ENCODE measurements at regions of chr3 and their contacts with region 1.

Region 1: DNA sequence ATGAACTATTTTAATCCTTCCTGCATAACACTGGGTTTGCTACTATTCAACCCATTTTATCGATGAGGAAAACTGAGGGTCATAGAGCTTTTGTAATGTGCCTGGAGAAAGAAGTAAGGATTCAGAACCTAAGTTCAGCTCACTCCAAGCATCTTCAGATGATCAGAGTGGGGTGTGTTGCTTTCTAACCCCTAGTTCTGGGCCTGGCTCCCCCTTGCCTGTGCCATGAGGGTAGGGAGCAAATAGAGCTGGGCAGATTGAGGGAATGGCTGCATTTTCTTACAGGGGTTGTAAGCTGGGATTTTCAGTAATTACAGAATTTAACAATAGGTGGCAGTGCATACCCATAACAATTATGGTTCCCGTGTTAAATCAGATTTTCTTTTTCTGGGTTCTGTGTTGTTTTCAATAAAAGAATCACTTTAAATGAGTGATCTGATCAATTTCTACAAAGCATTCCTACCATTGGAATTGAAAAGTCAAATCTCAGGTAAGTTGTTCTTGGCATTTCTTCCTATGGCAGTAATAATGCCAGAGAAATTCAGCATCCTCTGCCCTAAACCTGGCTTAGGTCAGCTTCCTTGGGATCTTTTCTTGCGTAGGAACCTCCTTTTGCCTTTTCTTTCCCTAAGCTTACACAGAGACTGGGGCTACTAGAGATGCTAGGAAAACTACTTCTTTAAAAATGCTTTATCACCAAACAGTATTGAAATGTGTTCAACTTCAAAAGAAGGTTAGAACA is 103.8 kb upstream of the IL12A start:
- DNase-seq: no peak
- ATAC-seq: peak; percentile 48 to 57
- H3K4me3 ChIP-seq: no peak overlapping the region
- H3K27ac ChIP-seq: no peak overlapping the region
- H3K4me1 ChIP-seq: peaks cover 19% of the 10 kb centered on the region
- H3K27me3 ChIP-seq: no peaks in the 10 kb centered on the region
- CTCF ChIP-seq: peak; percentile 56

Region 2: DNA sequence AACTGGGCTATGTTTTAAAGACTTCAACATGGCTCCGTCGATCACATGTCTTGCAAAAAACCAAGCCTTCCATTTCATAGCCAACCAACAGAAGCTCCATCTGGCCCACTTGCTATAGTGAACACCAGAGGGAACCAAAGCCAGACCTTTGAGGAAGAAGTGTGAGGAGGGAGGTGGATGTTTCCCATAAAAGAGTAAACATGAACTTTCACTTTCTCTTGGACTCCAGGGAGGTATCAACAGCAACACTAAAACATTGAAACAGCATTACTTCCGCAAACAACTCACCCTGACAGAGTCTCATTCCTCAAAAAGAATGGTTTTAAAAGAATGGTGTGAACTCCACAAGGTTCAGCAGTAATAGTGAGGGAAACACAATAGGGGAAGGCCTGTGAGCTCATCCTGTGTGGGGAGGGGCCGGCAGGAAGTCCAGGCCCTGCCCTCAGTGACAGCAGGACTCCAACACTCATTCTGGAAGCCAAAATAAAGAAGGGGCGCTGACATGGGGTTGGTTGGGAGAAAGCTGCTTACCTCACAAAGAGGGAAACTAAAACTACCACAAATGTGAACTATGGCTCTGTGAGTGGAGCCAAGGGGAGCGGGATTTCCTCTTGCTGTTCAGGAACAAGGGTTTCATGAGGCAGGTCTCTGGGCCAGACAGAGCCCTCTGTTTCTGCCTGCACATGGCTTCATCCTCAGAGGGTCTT is 44.8 kb after region 1 on chr3:
- intact Hi-C with region 1: no loop called
- DNase-seq: peak; percentile 46
- ATAC-seq: peak; percentile 81 to 84
- H3K4me3 ChIP-seq: no peak overlapping the region
- H3K27ac ChIP-seq: peak overlapping the region; percentile 63
- H3K4me1 ChIP-seq: peaks cover 13% of the 10 kb centered on the region
- H3K27me3 ChIP-seq: no peaks in the 10 kb centered on the region
- CTCF ChIP-seq: peak; percentile 35

Region 3: GRCh38 chr3:160003520-160004128 is 118.8 kb after region 1 on chr3:
- intact Hi-C with region 1: loop called (anchors 5 kb)
- DNase-seq: peak; percentile 70
- ATAC-seq: peak; percentile 85 to 87
- H3K4me3 ChIP-seq: no peak overlapping the region
- H3K27ac ChIP-seq: no peak overlapping the region
- H3K4me1 ChIP-seq: no peaks in the 10 kb centered on the region
- H3K27me3 ChIP-seq: no peaks in the 10 kb centered on the region
- CTCF ChIP-seq: peak; percentile 63

Region 4: DNA sequence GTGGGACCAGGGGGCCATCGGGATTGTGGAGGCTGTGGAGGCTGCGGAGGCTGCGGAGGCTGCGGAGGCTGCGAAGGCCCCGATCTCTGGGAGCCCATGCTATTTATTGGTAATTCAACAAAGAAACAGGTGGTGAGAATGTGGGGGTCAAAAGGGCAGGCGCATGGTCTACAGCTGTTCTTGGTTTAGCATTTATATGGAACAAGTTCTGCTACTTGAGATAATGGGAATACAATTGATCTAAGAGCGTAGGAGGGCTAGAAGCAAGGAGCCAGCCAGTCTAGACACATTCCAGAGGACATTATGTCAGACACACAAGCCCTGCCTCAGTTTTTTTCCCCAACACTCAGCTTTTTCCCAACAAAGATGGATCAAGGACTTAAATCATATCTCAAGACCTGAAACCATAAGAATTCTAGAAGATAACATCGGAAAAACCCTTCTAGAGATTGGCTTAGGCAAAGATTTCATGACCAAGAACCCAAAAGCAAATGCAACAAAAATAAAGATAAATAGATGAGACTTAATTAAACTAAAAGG is 360.5 kb after region 1 on chr3:
- intact Hi-C with region 1: no loop called
- DNase-seq: no peak
- ATAC-seq: no peak
- H3K4me3 ChIP-seq: no peak overlapping the region
- H3K27ac ChIP-seq: no peak overlapping the region
- H3K4me1 ChIP-seq: no peaks in the 10 kb centered on the region
- H3K27me3 ChIP-seq: no peaks in the 10 kb centered on the region
- CTCF ChIP-seq: no peak

Measured in lower lobe of right lung (tissue), 2 donors.